ENCODE measurements at regions of chr1 and their contacts with region 1.

Region 1: DNA sequence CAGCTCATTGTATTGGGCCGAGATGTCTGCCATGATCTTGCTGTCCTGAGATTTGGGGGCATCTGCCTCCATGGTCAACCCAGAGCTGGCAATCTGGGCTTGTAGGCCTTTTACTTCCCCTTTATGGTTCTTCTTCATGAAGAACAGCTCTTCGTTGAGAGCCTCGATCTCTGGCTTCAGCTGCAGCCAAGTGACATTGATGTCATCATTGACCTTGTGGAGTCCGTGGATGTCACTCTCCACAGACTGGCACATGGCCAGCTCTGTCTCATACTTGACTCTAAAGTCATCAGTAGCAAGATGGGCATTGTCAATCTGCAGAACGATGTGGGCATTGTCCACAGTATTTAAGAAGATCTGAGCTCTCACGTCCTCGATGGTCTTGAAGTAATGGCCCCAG is 29.2 kb downstream of the RAP1A start:
- DNase-seq: no peak
- H3K4me3 Mint-ChIP-seq: no peak overlapping the region
- H3K27ac Mint-ChIP-seq: peak overlapping the region; percentile 64
- H3K4me1 Mint-ChIP-seq: peaks cover 74% of the 10 kb centered on the region
- H3K27me3 Mint-ChIP-seq: no peaks in the 10 kb centered on the region

Region 2: DNA sequence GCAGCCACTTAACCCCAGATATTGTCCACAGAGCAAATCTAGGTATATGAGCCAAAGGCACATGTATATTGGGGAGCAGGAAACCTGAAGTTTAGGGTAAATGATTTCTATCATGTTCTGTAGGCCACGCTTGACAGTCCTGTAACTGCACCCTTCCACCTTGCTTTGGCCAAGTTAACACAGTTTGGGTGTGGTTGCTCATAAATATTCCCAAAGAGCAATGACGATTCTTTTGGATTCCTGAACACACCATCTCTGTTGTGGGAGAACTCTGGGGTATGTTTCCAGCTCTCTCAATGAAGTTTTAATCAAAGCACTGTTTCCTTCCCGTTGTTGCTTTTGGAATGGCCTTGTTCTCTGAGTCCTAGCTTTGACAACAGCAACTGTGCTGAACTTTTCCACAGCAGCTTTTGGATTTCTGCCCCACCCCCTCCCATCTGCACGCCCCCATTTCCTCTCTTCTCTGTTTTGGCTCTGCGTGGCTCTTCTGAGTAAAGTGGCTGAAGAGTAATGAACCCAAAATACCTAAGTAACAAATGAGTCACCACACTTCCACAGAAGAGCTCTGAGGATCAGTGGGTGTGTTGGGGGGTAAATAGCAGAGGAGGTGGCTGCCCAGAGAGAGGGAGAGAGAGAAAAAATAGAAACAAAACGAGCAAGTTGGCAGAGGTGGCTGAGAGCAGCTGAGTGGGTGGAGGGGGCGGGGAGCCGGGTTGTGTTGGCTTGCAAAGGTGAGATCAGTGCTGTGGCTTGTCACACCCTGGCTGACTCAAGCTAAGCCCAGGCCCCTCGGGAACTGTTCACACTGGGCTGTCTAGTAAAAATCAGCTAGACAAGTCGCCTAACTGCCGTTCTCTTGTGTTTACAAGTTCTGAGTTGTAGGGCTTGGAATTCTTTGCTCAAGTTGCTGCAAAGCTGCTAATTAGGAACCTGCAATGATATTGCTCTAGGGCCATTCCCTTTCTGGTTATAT is 56.1 kb before region 1 on chr1:
- CTCF ChIA-PET with region 1: no interaction called
- POLR2A ChIA-PET with region 1: no interaction called
- intact Hi-C with region 1: no loop called
- DNase-seq: peak; percentile 99
- H3K4me3 Mint-ChIP-seq: peak overlapping the region; percentile 61
- H3K27ac Mint-ChIP-seq: peak overlapping the region; percentile 93
- H3K4me1 Mint-ChIP-seq: peaks cover 74% of the 10 kb centered on the region
- H3K27me3 Mint-ChIP-seq: no peaks in the 10 kb centered on the region

Region 3: DNA sequence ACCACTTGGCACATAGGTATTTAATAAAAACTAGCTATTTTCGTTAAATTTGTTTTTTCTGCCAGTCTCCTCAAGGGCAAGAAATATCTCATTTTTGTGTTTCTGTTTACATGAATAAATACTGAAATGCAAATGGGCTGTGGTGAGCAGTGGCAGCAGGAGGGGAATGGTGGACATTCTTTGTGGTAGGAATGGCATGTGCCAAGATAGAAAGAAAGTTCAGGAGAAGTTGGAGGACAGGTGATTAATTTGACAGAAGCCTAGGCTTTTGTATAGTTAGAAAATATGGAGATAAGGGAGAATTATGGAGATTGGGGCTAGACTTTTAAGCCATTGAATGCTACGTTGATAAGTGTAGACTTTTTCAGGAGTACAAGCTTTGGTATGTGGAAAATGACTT is 20.7 kb before region 1 on chr1:
- CTCF ChIA-PET with region 1: interaction called, 3 read pairs
- POLR2A ChIA-PET with region 1: no interaction called
- intact Hi-C with region 1: loop called (anchors 2 kb)
- DNase-seq: no peak
- H3K4me3 Mint-ChIP-seq: peak overlapping the region; percentile 18
- H3K27ac Mint-ChIP-seq: peak overlapping the region; percentile 68
- H3K4me1 Mint-ChIP-seq: peaks cover 82% of the 10 kb centered on the region
- H3K27me3 Mint-ChIP-seq: no peaks in the 10 kb centered on the region